AG04449 (cell line): ENCODE measurements at regions of chr19 and their contacts with region 1.

Region 1: GRCh38 chr19:47348819-47349795 is at the start of gene DHX34:
- DNase-seq: peak; percentile 90
- H3K4me3 ChIP-seq: peak within 1 kb of the TSS; percentile 98
- CTCF ChIP-seq: peak; percentile 95

Region 2: DNA sequence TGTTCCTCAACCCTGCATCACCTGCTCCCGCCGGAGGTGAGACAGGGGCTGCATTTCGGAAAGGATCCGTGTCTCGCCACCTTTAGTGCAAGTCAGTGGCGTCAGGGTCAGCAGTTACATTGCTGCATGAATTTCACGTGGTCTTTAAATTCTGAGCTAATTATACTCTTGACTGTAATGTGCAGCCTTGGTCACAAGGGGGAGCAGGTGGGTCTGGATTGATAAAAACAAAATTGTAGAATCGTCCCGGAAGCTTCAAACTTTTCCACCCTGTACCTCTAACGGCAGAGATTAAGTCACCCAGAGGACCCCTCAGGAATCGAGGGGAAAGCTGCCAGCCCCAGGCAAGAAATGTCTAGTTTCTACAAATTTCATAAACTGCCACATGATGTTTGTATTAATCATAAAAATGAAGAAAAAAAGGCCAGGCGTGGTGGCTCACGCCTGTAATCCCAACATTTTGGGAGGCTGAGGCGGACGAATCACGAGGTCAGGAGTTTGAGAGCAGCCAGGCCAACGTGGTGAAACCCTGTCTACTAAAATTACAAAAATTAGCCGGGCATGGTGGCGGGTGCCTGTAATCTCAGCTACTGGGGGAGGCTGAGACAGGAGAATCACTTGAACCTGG is 138.3 kb before region 1 on chr19:
- CTCF ChIA-PET with region 1: no interaction called
- POLR2A ChIA-PET with region 1: no interaction called
- DNase-seq: no peak
- H3K4me3 ChIP-seq: no peak overlapping the region
- CTCF ChIP-seq: peak; percentile 70

Region 3: GRCh38 chr19:47296036-47296435 is 53.1 kb before region 1 on chr19:
- CTCF ChIA-PET with region 1: interaction called, 21 read pairs
- POLR2A ChIA-PET with region 1: no interaction called
- DNase-seq: no peak
- H3K4me3 ChIP-seq: no peak overlapping the region
- CTCF ChIP-seq: peak; percentile 66

Region 4: DNA sequence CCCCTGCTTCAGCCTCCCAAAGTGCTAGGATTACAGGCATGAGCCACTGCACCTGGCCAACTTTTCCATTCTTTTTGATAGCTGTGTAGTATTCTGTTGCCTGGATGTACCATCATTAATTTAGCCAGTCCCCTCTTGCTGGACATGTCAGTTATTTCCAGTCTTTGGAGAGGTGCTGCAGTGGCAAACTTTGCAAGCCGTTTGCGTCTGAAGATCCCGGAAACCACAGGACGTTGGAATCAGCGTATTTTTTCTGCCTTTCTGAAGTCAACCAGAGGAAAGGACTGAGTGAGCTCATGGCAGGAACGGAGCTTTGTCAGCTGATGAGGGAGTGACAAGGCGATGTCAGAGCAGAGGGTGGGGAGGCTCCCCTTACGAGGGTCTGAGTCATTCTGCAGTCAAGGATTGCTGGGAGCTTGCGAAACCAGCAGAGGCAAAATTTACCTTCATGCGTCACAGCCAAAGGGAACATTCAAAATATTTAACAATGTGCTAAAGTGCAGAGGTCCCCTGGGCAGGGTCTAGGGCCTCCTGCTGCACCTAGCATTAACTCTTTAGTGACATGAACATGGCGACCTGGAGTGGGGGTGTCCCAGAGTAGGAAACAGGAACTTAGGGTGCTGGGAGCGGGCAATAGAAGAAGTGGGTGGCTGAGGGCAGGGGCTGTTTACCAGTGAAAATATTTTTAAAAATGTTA is 33.8 kb before region 1 on chr19:
- CTCF ChIA-PET with region 1: interaction called, 10 read pairs
- POLR2A ChIA-PET with region 1: no interaction called
- DNase-seq: peak; percentile 44
- H3K4me3 ChIP-seq: no peak overlapping the region
- CTCF ChIP-seq: no peak

Region 5: DNA sequence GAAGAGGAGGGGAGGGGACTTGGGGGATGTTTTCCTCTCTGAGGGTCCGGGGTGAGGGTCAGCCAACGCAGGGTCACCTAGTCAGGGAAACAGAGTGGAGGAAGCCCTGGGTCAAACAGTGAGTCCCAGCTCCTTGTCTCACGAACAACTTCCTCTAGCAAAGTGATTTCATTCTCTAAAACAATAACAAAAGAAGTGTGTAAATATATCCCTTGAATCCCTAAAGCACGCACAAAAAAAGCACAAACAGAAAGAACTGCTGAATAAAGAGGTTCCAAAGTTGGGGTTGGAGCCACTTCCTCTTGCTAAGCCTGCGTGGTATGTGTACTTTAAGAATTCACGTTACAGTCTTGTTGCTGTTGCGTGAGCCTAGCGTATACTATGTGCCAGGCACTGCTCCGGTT is 18.6 kb before region 1 on chr19:
- CTCF ChIA-PET with region 1: interaction called, 74 read pairs
- POLR2A ChIA-PET with region 1: no interaction called
- DNase-seq: no peak
- H3K4me3 ChIP-seq: no peak overlapping the region
- CTCF ChIP-seq: no peak

Region 6: DNA sequence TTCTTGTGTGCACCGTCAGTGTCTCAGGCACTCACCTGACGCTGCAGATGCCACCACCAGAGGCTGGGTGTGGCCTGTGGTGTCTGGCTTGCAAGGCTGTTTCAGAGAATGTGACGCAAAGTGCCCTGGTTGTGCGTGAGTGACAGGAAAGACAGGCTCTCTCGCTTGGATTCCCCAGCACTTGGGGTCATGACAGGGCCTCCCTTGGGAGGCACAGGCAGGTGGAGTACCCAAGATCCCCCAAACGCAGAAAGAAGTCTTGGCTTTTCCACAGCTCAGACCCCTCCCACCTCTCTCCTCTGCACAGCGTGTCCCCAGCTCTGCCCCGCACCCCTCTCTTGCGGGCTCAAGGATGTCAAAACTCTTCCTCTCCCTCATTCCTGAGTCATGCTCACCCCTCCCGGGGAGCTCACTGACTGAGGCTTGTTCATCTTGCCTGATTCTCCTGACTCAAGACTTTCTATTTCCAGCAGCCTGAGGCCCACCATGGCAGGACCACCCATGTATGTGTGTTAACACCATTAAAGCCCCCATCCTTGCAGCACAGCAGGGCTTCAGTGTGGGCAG is 21.0 kb after region 1 on chr19:
- CTCF ChIA-PET with region 1: interaction called, 87 read pairs
- POLR2A ChIA-PET with region 1: no interaction called
- DNase-seq: peak; percentile 16
- H3K4me3 ChIP-seq: no peak overlapping the region
- CTCF ChIP-seq: no peak

Region 7: DNA sequence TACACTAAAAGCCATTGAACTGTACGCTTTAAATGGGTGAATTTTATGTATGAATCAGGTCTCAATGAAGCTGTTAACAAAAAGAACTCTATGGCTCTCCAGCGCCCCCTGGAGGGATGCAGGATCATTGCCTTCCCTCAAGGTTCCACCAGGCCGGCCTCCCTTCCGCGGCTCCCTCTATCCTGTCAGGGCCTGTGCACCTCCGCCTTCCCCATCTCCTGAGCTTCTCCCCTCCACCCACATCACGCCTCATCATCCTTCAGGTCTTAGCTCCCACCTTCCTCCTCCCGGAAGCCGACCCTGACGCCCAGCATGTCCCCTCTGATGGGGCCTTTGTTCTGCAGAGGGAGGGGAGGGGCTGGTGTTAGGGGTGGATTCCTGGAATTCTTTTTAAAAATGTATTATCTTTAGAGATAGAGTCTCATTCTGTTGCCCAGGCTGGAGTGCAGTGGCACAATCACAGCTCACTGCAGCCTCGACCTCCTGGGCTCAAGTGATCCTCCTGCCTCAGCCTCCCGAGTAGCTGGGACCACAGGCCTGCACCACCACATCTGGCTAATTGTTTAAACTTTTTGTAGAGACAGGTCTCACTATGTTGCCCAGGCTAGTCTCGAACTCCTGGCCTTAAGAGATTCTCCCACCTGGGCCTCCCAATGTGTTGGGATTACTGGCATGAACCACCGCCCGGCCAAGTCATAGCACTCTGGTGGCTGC is 42.6 kb after region 1 on chr19:
- CTCF ChIA-PET with region 1: interaction called, 50 read pairs
- POLR2A ChIA-PET with region 1: interaction called, 3 read pairs
- DNase-seq: no peak
- H3K4me3 ChIP-seq: no peak overlapping the region
- CTCF ChIP-seq: peak; percentile 86